HEK293T (cell line): ENCODE measurements at regions of chr15 and their contacts with region 1.

Region 1: GRCh38 chr15:77070495-77071304 is at the start of gene TSPAN3:
- DNase-seq: peak; percentile 97

Region 2: DNA sequence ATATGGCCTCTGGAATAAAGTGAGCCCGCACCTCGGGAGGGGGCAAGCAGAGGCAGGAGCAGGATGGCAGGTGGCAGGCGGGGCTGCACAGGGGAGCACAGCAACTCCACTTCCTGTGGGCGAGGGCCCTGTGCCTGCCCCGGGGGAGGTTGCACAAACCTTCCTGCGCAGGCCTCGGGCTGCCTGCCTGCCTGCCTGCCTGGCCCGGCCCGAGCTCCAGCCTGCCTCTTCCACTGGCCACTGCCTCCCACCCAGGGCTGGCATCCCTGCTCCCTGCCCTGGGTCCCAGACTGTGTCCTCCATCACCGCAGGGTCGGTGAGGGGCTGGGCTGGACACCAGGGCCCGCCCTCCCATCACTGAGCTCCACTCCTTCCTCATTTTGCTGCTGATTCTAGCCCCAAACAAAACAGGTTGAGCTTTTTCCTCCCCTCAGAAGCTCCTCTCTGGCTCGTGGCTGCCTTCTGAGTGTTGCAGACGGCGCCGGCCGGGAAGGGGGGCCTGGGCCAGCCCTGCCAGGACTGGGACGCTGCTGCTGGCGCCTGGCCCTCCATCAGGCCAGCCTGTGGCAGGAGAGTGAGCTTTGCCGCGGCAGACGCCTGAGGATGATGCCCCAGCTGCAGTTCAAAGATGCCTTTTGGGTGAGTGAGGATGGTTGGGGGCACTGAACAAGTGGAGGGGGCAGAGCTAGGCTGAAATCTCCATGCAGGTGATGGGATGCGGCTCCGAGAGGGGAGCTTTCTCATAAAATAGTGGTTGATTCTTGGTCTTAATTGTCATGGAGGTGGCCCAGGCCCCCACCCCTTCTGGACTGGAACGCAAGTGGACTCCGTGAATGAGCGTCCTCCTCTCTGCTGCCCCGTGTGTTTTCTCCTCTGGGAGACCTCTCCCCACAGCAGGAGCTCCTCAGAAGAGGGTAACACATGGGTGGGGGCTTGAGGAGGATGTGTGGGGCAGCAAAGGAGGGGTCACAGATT is 75.4 kb before region 1 on chr15 and contains the start of gene PSTPIP1:
- CTCF ChIA-PET with region 1: no interaction called
- POLR2A ChIA-PET with region 1: no interaction called
- DNase-seq: no peak

Region 3: GRCh38 chr15:77059786-77060361 is 10.8 kb before region 1 on chr15:
- CTCF ChIA-PET with region 1: interaction called, 3 read pairs
- POLR2A ChIA-PET with region 1: interaction called, 25 read pairs
- DNase-seq: no peak